CD8-positive, alpha-beta memory T cell (primary cell): ENCODE measurements at regions of chr3 and their contacts with region 1.

Region 1: GRCh38 chr3:113745273-113746068 is 578 bp downstream of the NAA50 start:
- DNase-seq: peak; percentile 66 to 87 (median 81)
- H3K4me3 ChIP-seq: peak overlapping the region; percentile 78
- H3K4me3 Mint-ChIP-seq: peak overlapping the region; percentile 92 to 100 (median 98)
- H3K27ac ChIP-seq: peak overlapping the region; percentile 99
- H3K27ac Mint-ChIP-seq: peak overlapping the region; percentile 100
- H3K4me1 ChIP-seq: peaks cover 47% of the 10 kb centered on the region
- H3K4me1 Mint-ChIP-seq: peaks cover 62 to 81% (median 78%) of the 10 kb centered on the region in 3 donors
- H3K27me3 ChIP-seq: no peaks in the 10 kb centered on the region
- H3K27me3 Mint-ChIP-seq: peaks cover 0 to 8% of the 10 kb centered on the region in 2 donors

Region 2: DNA sequence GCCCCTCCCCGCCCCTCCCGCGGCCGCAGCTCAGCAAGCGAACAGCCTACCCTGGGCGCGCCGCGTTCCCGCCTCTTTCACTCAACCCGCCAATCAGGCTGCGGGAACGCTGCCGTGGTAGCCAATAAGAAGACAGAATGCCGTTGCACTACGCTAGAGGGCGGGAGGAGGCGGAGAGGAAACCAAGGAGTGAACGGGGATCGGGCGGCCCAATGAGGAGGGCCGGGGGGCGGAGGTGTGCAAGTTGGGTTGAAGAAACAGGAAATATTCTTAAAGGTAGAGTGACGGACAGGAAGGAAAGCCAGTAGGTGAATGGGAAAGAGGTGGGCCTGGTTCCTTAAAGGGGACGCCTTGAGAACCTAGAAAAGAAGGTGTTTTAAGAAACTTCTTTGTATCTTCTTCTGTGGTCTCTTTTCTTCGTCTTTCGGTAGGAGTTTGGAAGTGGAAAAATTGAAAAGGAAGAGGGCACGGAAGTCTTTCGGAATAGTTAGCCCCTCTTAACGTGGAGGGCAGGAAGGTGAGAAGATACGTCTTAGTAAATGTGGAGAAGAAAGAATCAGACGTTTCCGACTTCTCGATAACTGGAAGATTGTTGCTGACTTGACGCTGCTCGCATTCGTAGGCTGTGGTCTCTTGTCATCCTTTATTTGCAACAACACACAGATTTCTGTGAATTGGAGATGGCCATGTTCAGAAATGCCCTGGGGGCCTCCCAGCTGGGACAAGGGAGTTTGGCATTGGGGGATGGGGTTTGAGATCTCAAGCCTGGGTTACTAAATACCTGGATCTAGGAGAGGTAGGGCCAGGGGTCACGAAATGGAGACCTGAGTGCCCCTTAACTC is 48.6 kb before region 1 on chr3:
- CTCF ChIA-PET with region 1: interaction called, 9 read pairs
- POLR2A ChIA-PET with region 1: interaction called, 29 read pairs
- DNase-seq: peak; percentile 98 to 100 (median 99)
- H3K4me3 ChIP-seq: peak overlapping the region; percentile 89
- H3K4me3 Mint-ChIP-seq: no peak overlapping the region
- H3K27ac ChIP-seq: peak overlapping the region; percentile 76
- H3K27ac Mint-ChIP-seq: no peak overlapping the region
- H3K4me1 ChIP-seq: peaks cover 28% of the 10 kb centered on the region
- H3K4me1 Mint-ChIP-seq: peaks cover 26 to 32% (median 28%) of the 10 kb centered on the region in 3 donors
- H3K27me3 ChIP-seq: no peaks in the 10 kb centered on the region
- H3K27me3 Mint-ChIP-seq: peaks cover 0 to 2% of the 10 kb centered on the region in 2 donors

Region 3: DNA sequence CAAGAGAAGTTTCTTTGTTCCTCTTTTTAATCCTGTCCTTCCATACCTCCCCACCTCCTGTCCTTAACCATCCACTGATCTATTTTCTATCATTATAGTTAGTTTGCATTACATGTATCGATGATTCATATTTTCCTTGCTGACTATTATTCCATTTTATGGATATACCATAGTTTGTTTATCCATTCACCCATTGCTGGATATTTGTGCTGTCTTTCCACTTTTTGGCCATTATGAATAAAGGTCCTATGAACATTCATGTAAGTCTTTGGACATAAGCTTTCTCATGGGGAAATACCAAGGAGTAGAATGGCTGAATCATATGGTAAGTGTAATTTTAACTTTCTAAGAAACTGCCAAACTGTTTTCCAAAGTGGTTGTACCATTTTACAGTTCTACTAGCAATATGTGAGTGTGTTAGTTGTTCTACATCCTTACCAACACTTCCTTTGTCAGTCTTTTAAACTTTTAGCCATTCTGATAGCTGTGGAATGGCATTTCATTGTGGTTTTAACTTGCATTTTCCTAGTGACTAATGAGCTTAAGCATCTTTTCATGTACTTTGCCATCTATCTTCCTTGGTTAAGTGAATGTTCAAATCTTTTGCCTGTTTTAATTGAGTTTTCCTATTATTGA is 13.0 kb after region 1 on chr3:
- CTCF ChIA-PET with region 1: interaction called, 12 read pairs
- POLR2A ChIA-PET with region 1: no interaction called
- DNase-seq: no peak
- H3K4me3 ChIP-seq: no peak overlapping the region
- H3K4me3 Mint-ChIP-seq: no peak overlapping the region
- H3K27ac ChIP-seq: no peak overlapping the region
- H3K27ac Mint-ChIP-seq: no peak overlapping the region
- H3K4me1 ChIP-seq: no peaks in the 10 kb centered on the region
- H3K4me1 Mint-ChIP-seq: peaks cover 5 to 16% (median 10%) of the 10 kb centered on the region in 3 donors
- H3K27me3 ChIP-seq: no peaks in the 10 kb centered on the region
- H3K27me3 Mint-ChIP-seq: no peaks in the 10 kb centered on the region